ENCODE measurements at regions of chr4 and their contacts with region 1.

Region 1: GRCh38 chr4:142423861-142424260 is 422.2 kb downstream of the INPP4B start:
- DNase-seq: no peak
- ATAC-seq: no peak
- H3K4me3 ChIP-seq: no peak overlapping the region
- H3K27ac ChIP-seq: no peak overlapping the region
- H3K4me1 ChIP-seq: no peaks in the 10 kb centered on the region
- H3K27me3 ChIP-seq: no peaks in the 10 kb centered on the region
- CTCF ChIP-seq: no peak

Region 2: GRCh38 chr4:142440098-142440497 is 16.2 kb after region 1 on chr4:
- CTCF ChIA-PET with region 1: interaction called, 10 read pairs
- POLR2A ChIA-PET with region 1: no interaction called
- in situ Hi-C with region 1: no loop called
- intact Hi-C with region 1: no loop called
- DNase-seq: no peak
- ATAC-seq: no peak
- H3K4me3 ChIP-seq: no peak overlapping the region
- H3K27ac ChIP-seq: no peak overlapping the region
- H3K4me1 ChIP-seq: no peaks in the 10 kb centered on the region
- H3K27me3 ChIP-seq: no peaks in the 10 kb centered on the region
- CTCF ChIP-seq: no peak

Region 3: GRCh38 chr4:143215873-143216272 is 792.0 kb after region 1 on chr4:
- CTCF ChIA-PET with region 1: no interaction called
- POLR2A ChIA-PET with region 1: no interaction called
- in situ Hi-C with region 1: no loop called
- intact Hi-C with region 1: no loop called
- DNase-seq: no peak
- ATAC-seq: no peak
- H3K4me3 ChIP-seq: no peak overlapping the region
- H3K27ac ChIP-seq: no peak overlapping the region
- H3K4me1 ChIP-seq: no peaks in the 10 kb centered on the region
- H3K27me3 ChIP-seq: no peaks in the 10 kb centered on the region
- CTCF ChIP-seq: no peak

Measured in Panc1 (cell line).